Right cardiac atrium (tissue), 5 donors: ENCODE measurements at regions of chr18 and their contacts with region 1.

Region 1: GRCh38 chr18:48600456-48601090 is 61.7 kb downstream of the CTIF start:
- DNase-seq: peak in 1 of 3 donors; percentile 32
- ATAC-seq: peak; percentile 55 to 81
- H3K4me3 ChIP-seq: no peak overlapping the region
- H3K27ac ChIP-seq: peak overlapping the region; percentile 83
- H3K4me1 ChIP-seq: peaks cover 12% of the 10 kb centered on the region
- H3K27me3 ChIP-seq: no peaks in the 10 kb centered on the region

Region 2: GRCh38 chr18:48356811-48357631 is 243.6 kb before region 1 on chr18:
- intact Hi-C with region 1: no loop called
- DNase-seq: no peak
- ATAC-seq: no peak
- H3K4me3 ChIP-seq: no peak overlapping the region
- H3K27ac ChIP-seq: no peak overlapping the region
- H3K4me1 ChIP-seq: no peaks in the 10 kb centered on the region
- H3K27me3 ChIP-seq: no peaks in the 10 kb centered on the region

Region 3: DNA sequence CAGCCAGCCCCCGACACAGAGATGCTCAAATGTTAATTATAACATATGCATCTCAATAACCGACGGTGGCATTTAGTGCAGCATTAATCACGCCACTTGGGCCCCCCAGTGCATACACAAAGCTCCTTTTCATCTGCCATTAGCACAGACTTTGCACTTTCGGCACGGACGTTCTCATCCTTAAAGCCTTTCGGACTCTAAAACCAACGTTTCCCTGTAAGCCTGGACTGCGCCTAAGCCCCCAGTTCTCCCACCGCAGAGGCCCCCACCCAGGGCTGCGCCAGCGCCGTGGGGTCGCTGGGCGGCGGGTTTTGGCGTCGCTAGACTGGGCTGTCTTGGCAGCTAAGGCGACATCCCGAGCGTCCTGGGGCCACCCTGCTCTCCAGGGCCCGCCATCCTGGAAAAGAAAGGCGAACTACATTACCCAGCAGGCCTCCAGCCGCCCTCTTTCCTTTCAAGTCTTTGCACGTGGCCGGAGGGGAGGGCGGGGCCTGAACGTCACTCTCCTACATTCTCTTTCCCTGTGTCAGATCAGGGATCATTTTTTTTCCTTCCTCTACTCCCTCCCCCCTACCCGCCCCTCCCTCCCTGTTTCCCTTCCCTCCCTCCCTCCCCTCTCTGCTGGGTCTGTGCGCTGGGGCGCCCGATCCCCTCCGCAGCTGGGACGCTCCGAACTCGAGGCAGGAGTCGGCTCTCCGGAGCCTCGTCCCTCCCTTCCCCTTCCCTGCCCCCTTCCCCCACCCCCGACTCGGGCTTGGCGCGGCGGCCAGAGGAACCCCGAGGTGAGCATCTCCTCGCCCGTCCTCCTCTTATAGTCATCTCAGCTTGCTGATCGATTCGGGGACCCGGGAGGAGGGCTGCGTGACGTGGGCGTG is 61.8 kb before region 1 on chr18 and contains the start of gene CTIF:
- intact Hi-C with region 1: loop called in 1 of 4 experiments (anchors 5 kb)
- DNase-seq: peak; percentile 97 to 99 (median 98)
- ATAC-seq: peak; percentile 93
- H3K4me3 ChIP-seq: peak within 1 kb of the TSS; percentile 80
- H3K27ac ChIP-seq: peak within 1 kb of the TSS; percentile 90
- H3K4me1 ChIP-seq: peaks cover 2% of the 10 kb centered on the region
- H3K27me3 ChIP-seq: no peaks in the 10 kb centered on the region
- total RNA-seq, gene CTIF: 41.0 to 78.2 (median 49.8) TPM

Region 4: DNA sequence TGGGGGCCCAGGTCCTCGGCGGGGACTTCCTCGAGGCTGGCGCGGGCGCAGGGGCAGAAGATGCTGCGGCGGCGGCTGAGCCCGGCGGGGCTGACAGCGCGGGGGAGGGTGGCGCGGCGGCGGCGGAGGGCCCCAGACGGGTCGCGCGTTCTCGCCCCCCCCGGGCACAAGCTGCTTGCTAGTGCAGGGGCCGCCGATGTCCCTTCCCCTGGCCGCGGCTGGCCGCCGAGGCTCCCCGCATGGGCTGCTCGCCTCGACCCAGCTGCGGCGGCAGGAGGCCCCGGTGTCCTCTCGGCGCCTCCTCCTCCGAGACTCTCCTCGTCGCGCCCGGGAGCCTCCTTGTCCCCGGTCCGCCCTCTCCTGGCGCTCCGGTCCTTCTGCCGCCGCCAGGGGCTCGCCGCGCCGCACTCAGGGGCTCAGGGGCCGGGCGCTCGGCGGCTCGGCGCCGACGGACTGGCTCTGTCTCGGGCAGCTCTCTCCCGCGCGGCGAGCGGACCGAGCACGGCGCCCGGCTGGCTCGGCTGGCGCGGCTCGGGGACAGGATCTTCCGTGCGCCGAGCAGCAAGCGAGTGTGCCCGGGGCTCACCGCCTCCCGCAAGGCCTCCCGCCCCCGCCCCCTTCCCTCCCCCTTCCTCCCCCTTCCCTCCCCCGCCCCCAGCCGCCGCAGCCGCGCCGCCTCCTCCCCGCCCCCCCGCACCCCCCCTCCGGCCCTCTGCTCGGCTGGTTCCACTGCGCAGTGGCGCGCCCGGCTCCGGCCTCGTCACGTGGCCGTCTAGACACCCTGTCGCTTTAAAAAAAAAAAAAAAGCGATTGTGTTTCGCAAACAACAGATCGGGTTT is 351.1 kb after region 1 on chr18:
- intact Hi-C with region 1: no loop called
- DNase-seq: peak; percentile 92 to 97 (median 96)
- ATAC-seq: peak; percentile 79 to 82
- H3K4me3 ChIP-seq: peak overlapping the region; percentile 86
- H3K27ac ChIP-seq: peak overlapping the region; percentile 95
- H3K4me1 ChIP-seq: peaks cover 13% of the 10 kb centered on the region
- H3K27me3 ChIP-seq: no peaks in the 10 kb centered on the region